Transverse colon (tissue), 4 donors: ENCODE measurements at regions of chr6 and their contacts with region 1.

Region 1: DNA sequence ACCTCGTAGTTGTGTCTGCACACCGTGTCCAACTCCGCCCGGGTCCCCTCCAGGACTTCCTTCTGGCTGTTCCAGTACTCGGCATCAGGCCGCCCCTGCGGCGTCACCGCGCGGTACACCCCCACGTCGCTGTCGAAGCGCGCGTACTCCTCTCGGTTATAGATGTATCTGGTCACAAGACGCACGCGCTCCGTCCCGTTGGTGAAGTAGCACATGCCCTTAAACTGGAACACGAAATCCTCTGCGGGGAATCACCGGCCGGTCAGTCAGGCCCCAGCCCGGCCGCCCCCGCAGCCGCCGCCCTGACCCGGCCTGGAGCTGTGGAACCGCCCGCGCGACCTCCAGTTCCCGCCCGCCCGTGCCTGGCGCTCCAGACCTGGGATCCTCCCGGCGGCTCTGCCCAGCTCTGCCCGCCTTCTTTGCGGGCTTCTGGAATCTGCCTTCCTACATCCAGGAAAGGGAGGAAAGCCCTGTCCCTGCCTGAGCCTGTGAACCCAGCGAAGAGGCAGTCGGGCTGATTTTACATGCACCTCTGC is 1.6 kb downstream of the HLA-DQB1 start:
- DNase-seq: peak; percentile 40
- H3K4me3 ChIP-seq: no peak overlapping the region
- H3K27ac ChIP-seq: no peak overlapping the region
- H3K4me1 ChIP-seq: no peaks in the 10 kb centered on the region
- H3K27me3 ChIP-seq: peaks cover 3% of the 10 kb centered on the region
- CTCF ChIP-seq: no peak
- EP300 ChIP-seq: no peak
- POLR2A ChIP-seq: no peak

Region 2: DNA sequence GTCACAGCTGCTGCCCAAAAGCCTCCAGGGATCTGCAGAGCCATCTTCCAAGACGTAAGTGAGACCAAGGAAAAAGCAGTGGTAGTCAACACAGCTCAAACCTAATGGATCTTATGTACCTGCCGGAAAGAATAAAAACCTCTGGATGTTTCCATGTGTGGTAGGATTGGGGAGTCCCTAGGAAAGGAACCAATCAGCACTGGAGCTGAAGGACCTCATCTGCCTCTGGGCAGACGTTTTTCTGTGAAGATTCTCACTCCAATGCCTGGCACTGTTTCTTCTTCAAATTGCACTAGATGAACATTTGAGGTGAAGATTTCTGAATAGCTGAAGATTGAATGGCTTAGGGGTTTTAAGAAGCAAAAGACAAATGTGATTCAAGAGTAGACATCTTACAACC is 98.5 kb after region 1 on chr6 and contains the start of gene HLA-DQB2:
- in situ Hi-C with region 1: loop called in 3 of 4 experiments (anchors 5 kb)
- intact Hi-C with region 1: loop called (anchors 2 kb)
- DNase-seq: no peak
- H3K4me3 ChIP-seq: no peak within 1 kb of the TSS
- H3K27ac ChIP-seq: no peak within 1 kb of the TSS
- H3K4me1 ChIP-seq: no peaks in the 10 kb centered on the region
- H3K27me3 ChIP-seq: peaks cover 15% of the 10 kb centered on the region
- CTCF ChIP-seq: no peak
- EP300 ChIP-seq: no peak
- POLR2A ChIP-seq: no peak
- total RNA-seq, gene HLA-DQB2: 0.27 to 0.32 TPM in 2 of 4 donors, not detected in the others

Region 3: DNA sequence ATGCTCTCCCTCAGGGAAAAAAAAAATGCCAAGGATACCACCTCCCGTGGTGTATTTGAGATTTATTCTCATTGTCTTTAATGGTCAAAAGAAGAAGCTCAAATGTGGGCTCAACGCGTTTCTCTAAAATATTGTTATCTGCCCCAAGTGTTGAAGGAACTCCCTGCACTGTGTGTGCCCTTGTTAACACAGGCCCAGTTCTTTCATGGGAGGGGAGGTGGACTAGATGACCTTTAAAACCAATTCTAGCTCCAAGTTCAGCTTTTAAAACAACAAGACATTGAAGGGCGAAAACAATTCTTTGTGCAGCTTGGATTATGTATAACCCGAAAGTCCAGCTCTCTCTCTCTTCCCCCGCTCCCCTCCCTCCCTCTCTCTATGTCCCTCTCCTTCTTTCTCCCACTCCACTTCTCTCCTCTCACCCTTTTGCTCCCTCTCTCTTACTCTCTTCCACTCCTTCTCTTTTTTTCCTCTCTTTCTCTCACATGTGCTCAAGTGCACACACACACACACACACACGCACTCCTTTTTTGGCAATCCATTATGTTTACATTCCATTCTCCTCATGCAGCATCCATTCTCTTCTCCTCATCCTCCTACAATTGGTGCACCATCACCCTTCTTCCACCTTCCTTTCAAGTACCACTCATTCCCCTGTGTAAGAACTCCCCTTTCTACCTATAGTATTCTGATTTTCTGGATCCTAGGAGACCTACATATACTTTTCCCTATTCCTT is 267.4 kb after region 1 on chr6:
- in situ Hi-C with region 1: no loop called
- intact Hi-C with region 1: no loop called
- DNase-seq: no peak
- H3K4me3 ChIP-seq: no peak overlapping the region
- H3K27ac ChIP-seq: no peak overlapping the region
- H3K4me1 ChIP-seq: no peaks in the 10 kb centered on the region
- H3K27me3 ChIP-seq: no peaks in the 10 kb centered on the region
- CTCF ChIP-seq: no peak
- EP300 ChIP-seq: no peak
- POLR2A ChIP-seq: no peak